ENCODE measurements at regions of chr16 and their contacts with region 1.

Region 1: GRCh38 chr16:13957197-13958078 is 37.5 kb downstream of the ERCC4 start:
- DNase-seq: peak; percentile 91
- H3K4me3 ChIP-seq: peak overlapping the region in 1 of 3 experiments; percentile 37
- H3K27ac ChIP-seq: peak overlapping the region; percentile 88
- H3K4me1 ChIP-seq: peaks cover 16% of the 10 kb centered on the region
- H3K27me3 ChIP-seq: no peaks in the 10 kb centered on the region
- CTCF ChIP-seq: no peak
- POLR2A ChIP-seq: no peak

Region 2: DNA sequence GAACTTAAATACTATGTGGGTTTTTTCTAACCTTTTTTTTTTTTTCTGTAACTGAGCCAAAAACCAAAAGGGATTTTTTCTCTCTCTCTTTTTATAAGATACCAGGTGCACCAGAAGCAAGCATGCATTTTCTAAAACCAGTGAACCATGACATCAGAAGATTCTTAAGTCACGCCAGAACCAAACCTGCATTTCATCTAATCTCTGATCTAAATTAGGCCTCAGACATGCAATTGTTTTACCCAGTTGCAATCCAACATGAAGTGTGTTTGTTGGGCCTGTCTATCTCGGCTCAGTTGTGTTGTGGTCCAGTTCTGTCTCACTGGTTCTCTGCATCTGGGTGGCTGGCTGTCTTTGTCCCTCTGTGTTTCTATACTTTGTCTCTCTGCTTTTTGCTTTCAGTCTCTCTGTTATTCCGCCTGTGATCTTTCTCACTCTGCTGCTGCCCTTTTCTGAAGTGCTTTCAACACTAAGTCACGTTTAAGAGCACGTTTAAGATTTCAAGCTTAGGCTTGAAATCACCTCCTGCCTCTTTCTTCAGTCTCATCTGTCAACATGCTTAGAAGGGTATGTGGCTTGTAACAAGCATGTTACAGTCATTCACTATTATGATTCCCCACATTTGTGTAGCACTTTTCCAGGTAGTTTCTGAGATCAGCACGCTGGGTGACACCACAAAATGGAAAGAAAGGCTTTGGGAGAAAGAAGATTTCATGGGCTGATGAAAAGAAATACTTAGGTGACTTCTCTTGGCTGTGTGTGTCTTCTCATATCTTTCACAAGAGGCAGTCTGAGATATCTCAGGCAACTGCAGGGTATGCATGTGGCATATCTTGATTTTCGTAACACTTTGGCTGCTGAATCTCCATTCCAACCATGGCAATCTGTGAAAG is 567.1 kb before region 1 on chr16:
- CTCF ChIA-PET with region 1: no interaction called
- POLR2A ChIA-PET with region 1: no interaction called
- dilution Hi-C with region 1: no loop called
- intact Hi-C with region 1: no loop called
- DNase-seq: no peak
- H3K4me3 ChIP-seq: no peak overlapping the region
- H3K27ac ChIP-seq: no peak overlapping the region
- H3K4me1 ChIP-seq: no peaks in the 10 kb centered on the region
- H3K27me3 ChIP-seq: no peaks in the 10 kb centered on the region
- CTCF ChIP-seq: no peak
- POLR2A ChIP-seq: no peak

Region 3: GRCh38 chr16:14003074-14003570 is 45.7 kb after region 1 on chr16:
- CTCF ChIA-PET with region 1: no interaction called
- POLR2A ChIA-PET with region 1: no interaction called
- dilution Hi-C with region 1: no loop called
- intact Hi-C with region 1: loop called (anchors 5 kb)
- DNase-seq: peak; percentile 29
- H3K4me3 ChIP-seq: peak overlapping the region in 2 of 3 experiments; percentile 7 to 12
- H3K27ac ChIP-seq: no peak overlapping the region
- H3K4me1 ChIP-seq: peaks cover 16% of the 10 kb centered on the region
- H3K27me3 ChIP-seq: peaks cover 8 to 11% of the 10 kb centered on the region in 2 experiments
- CTCF ChIP-seq: no peak
- POLR2A ChIP-seq: no peak

Region 4: GRCh38 chr16:14015948-14016347 is 58.5 kb after region 1 on chr16:
- CTCF ChIA-PET with region 1: no interaction called
- POLR2A ChIA-PET with region 1: no interaction called
- dilution Hi-C with region 1: no loop called
- intact Hi-C with region 1: loop called (anchors 1 kb)
- DNase-seq: peak; percentile 73
- H3K4me3 ChIP-seq: no peak overlapping the region
- H3K27ac ChIP-seq: no peak overlapping the region
- H3K4me1 ChIP-seq: peaks cover 19% of the 10 kb centered on the region
- H3K27me3 ChIP-seq: peaks cover 0 to 2% of the 10 kb centered on the region in 2 experiments
- CTCF ChIP-seq: no peak
- POLR2A ChIP-seq: no peak

Region 5: GRCh38 chr16:14070877-14071575 is 113.6 kb after region 1 on chr16 and contains the start of gene MRTFB:
- CTCF ChIA-PET with region 1: no interaction called
- POLR2A ChIA-PET with region 1: no interaction called
- dilution Hi-C with region 1: no loop called
- intact Hi-C with region 1: loop called (anchors 5 kb)
- DNase-seq: peak; percentile 70
- H3K4me3 ChIP-seq: peak within 1 kb of the TSS; percentile 74 to 96 (median 82)
- H3K27ac ChIP-seq: peak within 1 kb of the TSS; percentile 68
- H3K4me1 ChIP-seq: peaks cover 11% of the 10 kb centered on the region
- H3K27me3 ChIP-seq: no peaks in the 10 kb centered on the region
- CTCF ChIP-seq: no peak
- POLR2A ChIP-seq: no peak
- total RNA-seq, gene MRTFB: 49.5 and 50.2 TPM in 2 replicates

Region 6: DNA sequence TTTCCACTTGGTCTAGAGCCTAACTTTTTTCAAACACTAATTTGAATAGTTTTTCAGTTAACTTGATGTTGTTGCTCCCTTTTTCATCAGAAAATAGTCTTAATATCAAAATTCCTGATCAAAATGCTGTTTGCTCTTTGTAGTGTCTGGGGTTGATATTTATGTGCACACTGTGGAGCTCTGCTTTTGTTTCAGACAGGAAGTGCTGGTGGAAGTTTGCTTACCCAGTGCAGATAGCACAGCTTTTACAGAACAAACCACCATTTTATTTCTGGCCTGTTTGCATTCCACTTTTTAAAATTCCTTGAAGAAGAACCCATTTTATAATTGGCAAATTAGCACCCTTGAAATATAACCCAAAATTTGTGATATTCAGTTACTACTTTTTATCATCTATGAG is 239.1 kb after region 1 on chr16:
- CTCF ChIA-PET with region 1: no interaction called
- POLR2A ChIA-PET with region 1: no interaction called
- dilution Hi-C with region 1: no loop called
- intact Hi-C with region 1: loop called (anchors 5 kb)
- DNase-seq: peak; percentile 73
- H3K4me3 ChIP-seq: no peak overlapping the region
- H3K27ac ChIP-seq: peak overlapping the region; percentile 48
- H3K4me1 ChIP-seq: peaks cover 18% of the 10 kb centered on the region
- H3K27me3 ChIP-seq: no peaks in the 10 kb centered on the region
- CTCF ChIP-seq: no peak
- POLR2A ChIP-seq: no peak